ENCODE measurements at regions of chr18 and their contacts with region 1.

Region 1: DNA sequence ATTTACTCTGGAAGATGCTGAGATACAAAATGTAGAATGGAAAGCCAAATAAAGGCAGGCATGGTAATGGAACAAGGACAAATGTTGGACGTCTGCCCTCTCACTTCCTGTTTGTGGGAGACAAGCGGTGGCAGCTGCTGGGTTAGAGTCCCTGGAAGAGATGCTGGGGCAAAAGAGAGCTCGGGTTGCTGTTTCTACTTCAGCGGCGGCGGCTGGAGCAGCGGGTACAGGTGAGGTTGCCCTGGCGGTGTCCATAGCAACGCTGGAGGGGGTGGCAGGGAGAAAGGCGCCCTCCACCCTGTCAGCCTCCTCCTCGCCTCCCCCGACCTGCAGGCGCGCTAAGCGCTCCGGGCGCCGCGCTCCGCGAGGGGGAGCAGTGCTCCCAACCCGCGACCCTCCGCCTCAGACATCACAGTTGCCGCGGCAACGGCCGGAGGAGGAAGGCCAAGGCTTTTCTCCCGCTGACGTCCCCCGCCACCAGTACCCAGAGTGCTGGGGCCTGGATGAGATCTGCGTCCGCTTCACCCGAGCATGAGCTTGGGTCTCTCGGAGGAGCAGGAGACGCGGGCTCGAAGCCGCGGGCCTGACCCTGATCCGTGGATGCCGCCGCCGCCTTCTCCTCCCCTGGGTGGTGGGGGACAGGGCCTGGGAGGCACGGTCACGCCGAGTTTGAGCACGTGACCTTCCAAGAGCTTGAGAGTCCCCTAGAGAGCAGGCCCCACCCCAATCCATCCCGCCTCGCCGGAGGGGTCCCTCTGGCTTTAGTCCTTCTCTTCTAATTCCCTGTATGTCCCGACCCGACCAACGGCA is 65.6 kb downstream of the NOL4 start:
- DNase-seq: no peak
- ATAC-seq: peak; percentile 83
- H3K4me3 ChIP-seq: no peak overlapping the region
- H3K27ac ChIP-seq: no peak overlapping the region
- H3K4me1 ChIP-seq: no peaks in the 10 kb centered on the region
- H3K27me3 ChIP-seq: no peaks in the 10 kb centered on the region
- CTCF ChIP-seq: peak in 2 of 3 experiments; percentile 28 to 51; a peak in 1 of 6 replicates
- EP300 ChIP-seq: no peak
- POLR2A ChIP-seq: no peak
- RAD21 ChIP-seq: peak; percentile 33; the same call in 1 of the 2 replicates

Region 2: DNA sequence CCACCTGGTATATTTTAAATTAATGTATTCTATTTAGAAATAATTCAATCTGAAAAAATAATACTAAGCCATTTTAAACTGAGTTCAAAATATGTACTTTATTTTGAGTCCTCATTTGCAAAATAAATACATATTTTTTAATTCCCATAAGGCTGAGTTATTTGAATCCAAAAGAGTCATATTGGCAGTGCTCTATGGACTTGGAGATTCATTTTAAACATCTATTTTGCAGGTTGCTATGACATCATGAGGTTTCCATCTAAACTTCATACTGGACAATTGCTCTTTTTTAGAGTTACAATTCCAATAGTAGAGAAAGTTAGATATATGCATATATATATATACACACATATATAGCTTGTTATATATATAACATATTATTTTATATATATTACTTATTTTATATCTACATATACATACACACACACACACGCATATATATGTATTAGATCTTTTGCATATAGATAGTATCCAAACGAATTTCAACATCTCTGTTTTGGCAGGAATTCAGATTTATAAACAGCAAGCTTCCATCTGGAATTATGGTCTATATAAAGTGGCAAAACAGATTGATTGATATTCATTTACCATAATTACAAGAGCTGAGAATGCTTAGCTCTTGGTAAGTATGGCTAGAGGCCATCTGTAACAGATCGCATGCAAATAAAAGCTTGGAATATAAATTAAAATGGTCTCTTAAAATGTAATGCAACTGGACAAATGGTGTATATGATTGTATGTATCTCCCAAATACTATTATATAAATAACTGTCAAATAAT is 30.8 kb after region 1 on chr18:
- CTCF ChIA-PET with region 1: interaction called, 4 read pairs
- POLR2A ChIA-PET with region 1: interaction called, 5 read pairs
- RAD21 ChIA-PET with region 1: interaction called, 4 read pairs
- SMC1A ChIA-PET with region 1: interaction called, 20 read pairs
- in situ Hi-C with region 1: no loop called
- intact Hi-C with region 1: no loop called
- DNase-seq: no peak
- ATAC-seq: no peak
- H3K4me3 ChIP-seq: no peak overlapping the region
- H3K27ac ChIP-seq: no peak overlapping the region
- H3K4me1 ChIP-seq: no peaks in the 10 kb centered on the region
- H3K27me3 ChIP-seq: no peaks in the 10 kb centered on the region
- CTCF ChIP-seq: no peak
- EP300 ChIP-seq: no peak
- POLR2A ChIP-seq: no peak
- RAD21 ChIP-seq: no peak

Region 3: DNA sequence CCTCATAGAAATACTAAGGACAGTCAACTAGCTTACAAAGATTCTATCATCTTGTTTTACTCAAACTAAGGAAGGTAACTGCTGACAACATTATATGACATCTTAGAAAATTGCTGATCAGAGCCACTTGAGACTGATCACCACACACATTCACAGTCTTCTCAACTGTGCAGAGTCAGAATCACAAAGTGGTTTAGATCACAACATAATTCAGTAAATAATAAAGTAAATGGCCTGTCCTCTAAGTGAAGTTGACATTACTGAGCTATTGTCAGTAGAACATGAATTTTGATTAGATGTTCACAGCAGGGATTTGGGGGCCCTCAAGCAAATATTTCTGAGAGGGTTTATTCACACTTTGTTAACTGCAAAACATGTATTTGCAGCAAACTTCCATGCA is 37.2 kb after region 1 on chr18:
- CTCF ChIA-PET with region 1: interaction called, 5 read pairs
- POLR2A ChIA-PET with region 1: interaction called, 5 read pairs
- RAD21 ChIA-PET with region 1: interaction called, 4 read pairs
- SMC1A ChIA-PET with region 1: interaction called, 10 read pairs
- in situ Hi-C with region 1: no loop called
- intact Hi-C with region 1: no loop called
- DNase-seq: no peak
- ATAC-seq: peak; percentile 35; the same call in 2 of the 3 replicates
- H3K4me3 ChIP-seq: no peak overlapping the region
- H3K27ac ChIP-seq: no peak overlapping the region
- H3K4me1 ChIP-seq: no peaks in the 10 kb centered on the region
- H3K27me3 ChIP-seq: no peaks in the 10 kb centered on the region
- CTCF ChIP-seq: no peak
- EP300 ChIP-seq: no peak
- POLR2A ChIP-seq: no peak
- RAD21 ChIP-seq: no peak

Region 4: DNA sequence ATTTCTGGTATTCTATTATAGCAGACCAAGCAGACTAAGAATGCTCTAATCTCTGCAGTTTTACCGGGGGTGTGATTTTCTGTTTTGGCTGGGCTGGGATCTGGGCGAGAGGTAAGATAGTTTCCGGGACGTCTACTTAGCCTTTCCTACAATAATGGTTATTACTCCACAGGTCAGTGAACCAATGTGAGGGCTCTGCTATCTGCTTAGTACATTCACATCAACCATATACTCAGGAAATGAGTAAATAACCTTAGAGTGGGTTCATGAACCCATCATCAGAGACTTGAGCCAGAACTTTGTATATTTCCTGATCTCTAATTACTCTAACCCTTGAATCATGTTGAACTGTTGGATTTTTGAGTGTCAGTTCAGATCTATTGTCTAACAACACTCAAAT is 155.8 kb after region 1 on chr18:
- CTCF ChIA-PET with region 1: interaction called, 9 read pairs
- POLR2A ChIA-PET with region 1: no interaction called
- RAD21 ChIA-PET with region 1: interaction called, 5 read pairs
- SMC1A ChIA-PET with region 1: interaction called, 13 read pairs
- in situ Hi-C with region 1: no loop called
- intact Hi-C with region 1: no loop called
- DNase-seq: no peak
- ATAC-seq: no peak
- H3K4me3 ChIP-seq: no peak overlapping the region
- H3K27ac ChIP-seq: no peak overlapping the region
- H3K4me1 ChIP-seq: no peaks in the 10 kb centered on the region
- H3K27me3 ChIP-seq: no peaks in the 10 kb centered on the region
- CTCF ChIP-seq: no peak
- EP300 ChIP-seq: no peak
- POLR2A ChIP-seq: no peak
- RAD21 ChIP-seq: no peak

Measured in GM12878 (cell line).